ENCODE measurements at regions of chr10 and their contacts with region 1.

Region 1: DNA sequence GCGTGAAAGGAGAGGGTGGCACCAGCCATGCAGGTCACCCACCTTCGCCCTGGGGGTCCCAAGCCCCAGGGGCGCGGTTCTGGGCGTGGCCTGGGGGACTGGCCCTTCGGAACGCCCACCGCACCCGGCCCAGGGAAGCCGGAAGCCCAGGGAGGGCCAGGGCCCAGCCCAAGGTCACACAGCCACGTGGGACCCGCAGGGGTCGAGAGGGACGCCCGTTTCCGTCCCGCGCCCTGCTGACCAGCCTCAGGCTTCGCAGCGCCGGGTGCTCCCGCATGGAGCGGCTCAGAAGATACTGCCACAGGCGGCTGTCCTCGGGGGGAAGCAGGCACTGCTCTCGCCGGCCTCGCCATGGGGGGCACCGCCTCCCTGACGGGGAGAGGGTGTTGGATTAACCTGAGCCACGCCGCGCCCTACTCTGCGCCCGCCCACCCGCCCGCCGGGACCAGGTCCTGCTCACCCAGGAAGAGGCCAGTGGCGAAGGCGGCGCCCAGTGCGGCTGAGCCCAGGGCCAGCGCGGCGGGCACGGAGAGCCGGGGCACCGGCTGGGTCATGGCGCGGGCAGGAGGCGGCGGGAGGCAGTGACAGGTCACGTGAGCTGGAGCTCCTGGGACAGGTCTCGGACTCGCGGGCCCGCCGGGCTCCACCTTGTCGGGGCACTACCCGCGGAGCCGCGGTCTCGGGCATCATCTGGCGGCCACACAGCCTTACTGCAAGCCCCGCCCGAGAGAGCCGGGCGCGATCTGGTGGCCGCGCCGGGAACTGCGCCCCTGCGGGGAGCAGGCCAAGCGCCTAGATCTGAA is at the start of gene COMTD1:
- DNase-seq: peak; percentile 96
- H3K4me3 Mint-ChIP-seq: peak within 1 kb of the TSS; percentile 73
- H3K27ac Mint-ChIP-seq: peak within 1 kb of the TSS; percentile 65
- H3K4me1 Mint-ChIP-seq: peaks cover 21% of the 10 kb centered on the region
- H3K27me3 Mint-ChIP-seq: no peaks in the 10 kb centered on the region
- total RNA-seq, gene COMTD1: 40.0 to 41.3 TPM

Region 2: GRCh38 chr10:74244097-74244685 is 991.4 kb before region 1 on chr10:
- CTCF ChIA-PET with region 1: interaction called, 12 read pairs
- POLR2A ChIA-PET with region 1: no interaction called
- intact Hi-C with region 1: no loop called
- DNase-seq: no peak
- H3K4me3 Mint-ChIP-seq: no peak overlapping the region
- H3K27ac Mint-ChIP-seq: no peak overlapping the region
- H3K4me1 Mint-ChIP-seq: no peaks in the 10 kb centered on the region
- H3K27me3 Mint-ChIP-seq: no peaks in the 10 kb centered on the region

Region 3: DNA sequence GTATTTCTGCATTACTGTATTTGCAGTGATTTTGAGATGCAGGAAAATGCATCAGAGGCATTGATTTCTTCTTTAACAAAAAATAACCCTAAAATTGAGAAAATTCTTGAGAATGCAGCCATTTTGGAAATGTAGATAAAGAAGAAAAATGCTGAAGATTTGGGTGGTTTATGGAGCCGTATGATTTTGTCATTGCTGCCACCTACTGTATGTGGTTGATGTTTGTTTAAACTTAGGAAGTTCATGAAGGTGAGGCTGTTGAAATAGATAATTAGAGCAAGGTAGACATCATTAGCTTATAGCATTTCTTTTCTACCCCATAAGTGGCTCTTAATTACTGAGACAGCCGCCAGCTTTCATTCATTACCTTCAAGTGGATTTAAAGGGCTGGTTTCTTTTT is 216.2 kb before region 1 on chr10:
- CTCF ChIA-PET with region 1: interaction called, 8 read pairs
- POLR2A ChIA-PET with region 1: no interaction called
- intact Hi-C with region 1: loop called (anchors 5 kb)
- DNase-seq: no peak
- H3K4me3 Mint-ChIP-seq: no peak overlapping the region
- H3K27ac Mint-ChIP-seq: no peak overlapping the region
- H3K4me1 Mint-ChIP-seq: peaks cover 18% of the 10 kb centered on the region
- H3K27me3 Mint-ChIP-seq: no peaks in the 10 kb centered on the region

Region 4: DNA sequence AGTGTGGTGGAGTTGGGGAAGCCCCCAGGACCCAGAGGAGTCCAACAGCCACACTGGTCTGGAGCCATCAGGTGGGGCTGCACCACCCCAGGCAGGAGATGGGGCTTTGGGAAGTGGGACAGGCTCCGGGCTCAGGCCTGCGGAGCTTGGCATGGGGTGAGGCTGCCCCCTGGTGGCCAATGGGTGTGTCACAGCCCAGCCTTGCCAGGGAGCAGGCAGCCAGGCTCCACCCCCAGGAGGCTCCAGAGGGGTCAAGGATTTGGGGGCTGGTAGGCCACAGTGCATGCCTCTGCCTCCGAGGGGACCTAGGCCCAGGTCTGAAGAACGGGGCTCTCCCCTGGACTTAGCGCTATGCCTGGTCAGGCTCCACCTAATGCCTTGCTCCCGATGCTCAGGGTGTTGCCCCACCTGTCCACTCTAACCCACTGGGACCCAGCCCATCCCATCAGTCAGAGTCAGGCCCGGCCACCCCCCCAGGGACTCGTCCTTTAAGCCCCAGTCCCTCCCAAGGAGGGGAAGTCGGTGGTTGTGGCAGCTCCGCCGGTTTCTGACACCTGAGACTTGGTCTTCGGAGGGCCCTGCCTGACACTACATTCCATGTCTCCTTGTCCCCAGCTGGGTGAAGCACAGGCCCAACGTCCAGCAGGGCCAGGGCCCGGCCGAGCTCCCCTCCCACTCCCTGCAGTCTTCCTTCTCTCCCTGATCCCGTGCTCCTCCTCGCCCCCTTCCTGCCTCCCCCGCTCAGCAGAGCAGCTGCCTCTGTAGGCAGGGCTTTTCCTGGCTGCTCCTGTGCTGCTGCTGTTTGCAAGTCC is 135.4 kb before region 1 on chr10:
- CTCF ChIA-PET with region 1: interaction called, 10 read pairs
- POLR2A ChIA-PET with region 1: no interaction called
- intact Hi-C with region 1: no loop called
- DNase-seq: peak; percentile 87
- H3K4me3 Mint-ChIP-seq: no peak overlapping the region
- H3K27ac Mint-ChIP-seq: no peak overlapping the region
- H3K4me1 Mint-ChIP-seq: no peaks in the 10 kb centered on the region
- H3K27me3 Mint-ChIP-seq: no peaks in the 10 kb centered on the region

Region 5: DNA sequence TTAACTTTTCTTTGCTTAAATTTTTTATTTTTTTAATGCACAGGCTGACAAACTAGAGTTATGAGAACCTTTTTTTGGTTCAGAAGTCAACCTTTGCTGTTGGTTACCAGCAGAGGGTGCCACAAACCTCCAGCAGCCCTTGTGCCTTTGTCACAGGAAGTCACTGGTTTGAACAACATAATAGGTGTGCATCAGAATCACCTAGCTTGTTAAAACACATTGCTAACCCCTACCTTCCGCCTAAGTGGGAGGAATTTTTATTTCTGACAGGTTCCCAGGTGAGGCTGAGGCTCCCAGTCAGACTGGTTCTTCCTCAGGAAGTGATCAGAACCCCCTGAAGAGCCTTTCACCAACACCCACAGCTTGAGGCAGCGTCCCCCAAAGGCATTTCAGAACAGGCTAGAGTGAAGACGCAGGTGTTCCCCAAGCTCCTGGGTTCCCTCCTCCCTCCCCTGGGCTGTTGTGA is 47.6 kb before region 1 on chr10:
- CTCF ChIA-PET with region 1: interaction called, 109 read pairs
- POLR2A ChIA-PET with region 1: interaction called, 5 read pairs
- intact Hi-C with region 1: loop called (anchors 1 kb)
- DNase-seq: peak; percentile 75
- H3K4me3 Mint-ChIP-seq: no peak overlapping the region
- H3K27ac Mint-ChIP-seq: peak overlapping the region; percentile 56
- H3K4me1 Mint-ChIP-seq: peaks cover 9% of the 10 kb centered on the region
- H3K27me3 Mint-ChIP-seq: no peaks in the 10 kb centered on the region

Measured in activated CD4-positive, alpha-beta memory T cell treated with anti-CD3 and anti-CD28 coated beads for 36 hours (primary cell).